CD4-positive, alpha-beta memory T cell (primary cell): ENCODE measurements at regions of chr22 and their contacts with region 1.

Region 1: DNA sequence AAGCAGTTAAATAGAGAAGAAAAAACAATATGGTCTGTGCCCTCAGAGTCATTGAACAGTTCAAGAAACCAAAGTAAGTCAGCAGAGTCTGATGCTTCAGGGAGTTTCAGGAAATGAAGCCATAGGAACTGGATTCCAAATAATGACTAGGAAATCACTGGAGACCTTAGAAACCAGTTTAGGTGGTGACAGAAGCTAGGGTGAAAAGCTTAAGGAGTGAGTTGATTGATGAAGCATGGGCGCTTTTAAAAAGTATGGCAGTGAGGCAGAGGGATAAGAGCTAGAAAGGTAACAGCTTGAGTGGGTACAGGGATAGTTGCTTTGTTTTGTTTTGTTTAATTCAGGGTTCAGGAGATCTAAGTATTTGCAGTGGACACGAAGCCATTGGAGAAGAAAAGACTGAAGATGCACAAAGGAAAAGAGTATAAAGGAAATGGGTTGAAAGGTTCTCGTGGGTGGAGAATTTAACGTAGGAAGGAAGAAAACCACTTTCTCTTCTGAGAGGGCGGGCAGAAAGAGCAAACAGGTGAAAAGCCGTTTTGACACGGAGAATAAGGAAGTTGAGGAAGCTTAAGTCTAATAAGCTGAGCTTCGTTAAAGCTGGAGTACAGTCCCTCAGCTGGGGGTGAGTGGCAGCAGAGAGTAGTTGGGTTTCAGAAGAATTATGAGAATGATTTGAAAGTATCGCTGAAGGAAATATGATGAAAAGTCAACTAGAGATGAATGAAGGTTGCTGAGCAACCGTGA is 14.8 kb downstream of the SGSM3 start:
- DNase-seq: peak; percentile 48 to 63 (median 60)
- H3K4me3 ChIP-seq: peak overlapping the region in 1 of 2 donors; percentile 31
- H3K4me3 Mint-ChIP-seq: peak overlapping the region; percentile 74 to 90 (median 86)
- H3K27ac ChIP-seq: peak overlapping the region; percentile 47
- H3K27ac Mint-ChIP-seq: peak overlapping the region; percentile 78 to 99 (median 93)
- H3K4me1 ChIP-seq: peaks cover 25% of the 10 kb centered on the region
- H3K4me1 Mint-ChIP-seq: peaks cover 40 to 66% (median 52%) of the 10 kb centered on the region in 4 donors
- H3K27me3 ChIP-seq: no peaks in the 10 kb centered on the region
- H3K27me3 Mint-ChIP-seq: no peaks in the 10 kb centered on the region

Region 2: GRCh38 chr22:40332319-40332781 is 52.9 kb before region 1 on chr22:
- CTCF ChIA-PET with region 1: no interaction called
- POLR2A ChIA-PET with region 1: no interaction called
- intact Hi-C with region 1: no loop called
- DNase-seq: peak in 4 of 5 donors; percentile 29 to 56 (median 39)
- H3K4me3 ChIP-seq: peak overlapping the region; percentile 17 to 18
- H3K4me3 Mint-ChIP-seq: peak overlapping the region; percentile 11 to 80 (median 71)
- H3K27ac ChIP-seq: peak overlapping the region; percentile 32
- H3K27ac Mint-ChIP-seq: peak overlapping the region; percentile 77 to 95 (median 90)
- H3K4me1 ChIP-seq: peaks cover 98% of the 10 kb centered on the region
- H3K4me1 Mint-ChIP-seq: peaks cover 71 to 99% (median 87%) of the 10 kb centered on the region in 4 donors
- H3K27me3 ChIP-seq: no peaks in the 10 kb centered on the region
- H3K27me3 Mint-ChIP-seq: no peaks in the 10 kb centered on the region

Region 3: GRCh38 chr22:40396882-40397281 is 11.7 kb after region 1 on chr22:
- CTCF ChIA-PET with region 1: interaction called, 6 read pairs
- POLR2A ChIA-PET with region 1: interaction called, 16 read pairs
- intact Hi-C with region 1: loop called (anchors 1 kb)
- DNase-seq: no peak
- H3K4me3 ChIP-seq: no peak overlapping the region
- H3K4me3 Mint-ChIP-seq: peak overlapping the region in 1 of 8 donors; percentile 27
- H3K27ac ChIP-seq: no peak overlapping the region
- H3K27ac Mint-ChIP-seq: peak overlapping the region in 5 of 7 donors; percentile 22 to 74 (median 43)
- H3K4me1 ChIP-seq: peaks cover 63% of the 10 kb centered on the region
- H3K4me1 Mint-ChIP-seq: peaks cover 50 to 86% (median 68%) of the 10 kb centered on the region in 4 donors
- H3K27me3 ChIP-seq: no peaks in the 10 kb centered on the region
- H3K27me3 Mint-ChIP-seq: no peaks in the 10 kb centered on the region